ENCODE measurements at regions of chr6 and their contacts with region 1.

Region 1: GRCh38 chr6:144710237-144710636 is 425.1 kb downstream of the UTRN start:
- DNase-seq: no peak
- H3K4me3 Mint-ChIP-seq: no peak overlapping the region
- H3K27ac Mint-ChIP-seq: no peak overlapping the region
- H3K4me1 Mint-ChIP-seq: no peaks in the 10 kb centered on the region
- H3K27me3 Mint-ChIP-seq: no peaks in the 10 kb centered on the region

Region 2: DNA sequence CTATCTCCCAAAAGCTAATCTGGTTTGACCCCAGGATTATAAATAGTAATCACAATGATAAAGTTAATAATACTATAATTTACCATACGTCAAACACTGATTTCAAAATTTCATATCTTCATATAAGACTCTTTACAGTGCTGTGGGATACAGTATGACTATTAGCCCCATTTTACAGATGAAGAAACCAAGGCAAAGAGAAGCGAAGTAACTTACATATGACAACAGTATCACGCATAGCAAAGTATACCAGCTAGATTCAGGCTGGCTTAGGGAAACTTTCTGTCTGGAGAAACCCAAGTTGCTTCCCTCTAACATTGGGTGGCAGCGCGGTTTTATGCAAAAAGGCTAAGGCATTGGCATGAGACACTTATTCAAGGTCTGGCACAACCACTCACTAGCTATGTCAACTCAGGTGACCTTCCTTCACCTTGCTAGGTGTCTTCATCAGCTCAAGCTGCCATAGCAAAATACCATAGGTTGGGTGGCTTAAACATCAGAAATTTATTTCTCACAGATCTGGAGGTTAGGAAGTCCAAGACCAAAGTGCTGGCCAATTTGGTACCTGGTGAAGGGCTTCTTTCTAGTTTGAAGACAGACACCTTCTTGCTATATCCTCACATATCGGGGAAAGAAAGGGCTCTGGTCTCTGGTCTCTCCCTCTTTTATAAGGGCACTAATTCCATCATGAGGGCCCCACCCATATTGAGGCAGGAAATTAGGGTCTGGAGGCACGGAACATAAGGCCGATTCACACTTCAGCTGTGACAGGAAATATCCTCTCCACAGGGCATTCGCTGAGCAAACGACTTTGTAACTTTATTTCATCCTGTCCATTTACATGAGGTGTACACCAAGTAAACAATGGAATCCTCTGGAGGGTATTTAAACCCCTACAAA is 447.5 kb before region 1 on chr6:
- CTCF ChIA-PET with region 1: no interaction called
- POLR2A ChIA-PET with region 1: interaction called, 12 read pairs
- DNase-seq: peak; percentile 39
- H3K4me3 Mint-ChIP-seq: no peak overlapping the region
- H3K27ac Mint-ChIP-seq: no peak overlapping the region
- H3K4me1 Mint-ChIP-seq: no peaks in the 10 kb centered on the region
- H3K27me3 Mint-ChIP-seq: peaks cover 2% of the 10 kb centered on the region

Region 3: DNA sequence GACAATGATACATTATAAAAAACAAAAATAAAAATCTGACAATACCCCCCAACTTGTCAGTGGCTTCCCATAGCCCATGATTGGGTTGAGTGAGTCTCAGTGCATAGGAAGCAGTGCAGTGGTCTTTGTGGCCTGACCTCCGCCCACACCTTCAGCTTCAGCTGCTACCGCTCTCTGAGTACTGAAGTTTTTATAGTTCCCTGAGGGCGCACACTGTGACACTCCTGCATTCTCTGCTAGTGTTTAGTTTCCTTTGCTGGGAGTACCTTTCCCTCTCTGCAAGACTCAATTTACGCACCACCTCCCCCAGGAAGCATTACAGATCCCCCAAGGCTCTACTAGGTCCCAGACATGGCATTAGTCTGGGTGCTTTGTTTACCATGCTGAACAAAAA is 15.9 kb after region 1 on chr6:
- CTCF ChIA-PET with region 1: no interaction called
- POLR2A ChIA-PET with region 1: no interaction called
- DNase-seq: peak; percentile 14
- H3K4me3 Mint-ChIP-seq: no peak overlapping the region
- H3K27ac Mint-ChIP-seq: peak overlapping the region; percentile 9
- H3K4me1 Mint-ChIP-seq: peaks cover 36% of the 10 kb centered on the region
- H3K27me3 Mint-ChIP-seq: no peaks in the 10 kb centered on the region

Measured in activated CD4-positive, alpha-beta T cell treated with anti-CD3 and anti-CD28 coated beads, Interleukin-2, amount 10 ng/mL, durations not matched to agents 7 days and 5 days (primary cell).